ENCODE measurements at regions of chrX and their contacts with region 1.

Region 1: DNA sequence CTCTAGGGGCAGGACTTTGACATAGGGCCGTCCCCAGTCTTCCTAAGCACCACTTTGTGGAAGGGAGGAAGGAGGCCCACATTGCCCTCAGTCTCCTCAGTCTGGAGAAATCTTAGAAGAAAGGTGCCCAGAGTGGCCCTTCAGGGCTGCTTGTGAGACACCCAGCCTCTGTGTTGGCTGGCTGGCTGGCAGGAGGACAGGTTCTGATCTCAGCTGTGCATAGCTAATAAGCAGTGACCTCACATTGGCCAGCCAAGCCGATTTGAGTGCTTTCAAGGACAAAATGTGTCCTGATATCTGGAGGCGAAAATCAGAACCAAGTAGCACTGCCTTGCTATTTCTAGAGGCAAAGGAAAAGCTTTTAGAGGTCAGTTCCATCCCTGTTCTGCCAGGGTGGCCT is 211.5 kb downstream of the BCOR start:
- DNase-seq: no peak
- ATAC-seq: peak; percentile 69

Region 2: GRCh38 chrX:39830414-39830813 is 55.9 kb before region 1 on chrX:
- intact Hi-C with region 1: loop called (anchors 5 kb)
- DNase-seq: no peak
- ATAC-seq: peak; percentile 73

Measured in Right ventricle myocardium inferior (tissue), 1 donor.